Posterior vena cava (tissue), 2 donors: ENCODE measurements at regions of chr20 and their contacts with region 1.

Region 1: DNA sequence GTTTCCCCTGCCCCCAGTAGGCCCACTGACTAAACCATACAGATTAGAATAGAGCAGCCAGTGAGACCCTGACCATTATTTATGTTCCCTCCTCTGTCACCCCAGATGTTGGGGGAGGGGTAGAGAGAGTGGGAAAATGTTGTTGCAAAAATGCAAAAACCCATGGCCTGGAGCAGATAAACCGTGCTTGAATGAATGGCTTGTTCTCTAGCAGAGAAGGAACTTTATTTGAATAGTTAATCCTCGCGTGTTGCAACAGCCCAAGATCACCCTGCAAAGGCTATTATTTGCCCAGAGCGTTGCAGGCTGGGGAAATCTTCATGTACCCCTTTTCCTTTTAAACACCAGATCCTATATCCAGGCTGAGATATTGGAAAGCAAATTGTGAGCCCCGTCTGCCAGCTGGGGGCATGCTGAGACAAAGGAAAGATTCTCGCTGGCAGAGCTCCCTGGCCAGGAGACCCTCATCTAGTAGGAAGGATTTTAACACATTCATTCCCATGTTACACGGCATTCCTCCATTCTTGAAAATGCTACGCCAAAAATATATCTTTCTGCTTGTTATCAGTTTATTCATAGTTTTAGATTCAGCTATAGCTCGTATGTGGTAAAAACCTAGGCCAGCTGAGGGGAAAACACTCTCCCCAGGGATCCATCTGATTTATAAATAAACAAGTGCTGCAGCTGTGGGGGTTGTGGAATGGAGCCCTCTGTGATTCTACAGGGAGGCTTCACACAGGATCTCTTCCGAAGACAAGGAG is 53.0 kb downstream of the LINC00237 start:
- DNase-seq: no peak

Region 2: GRCh38 chr20:19121469-19121868 is 1931.7 kb before region 1 on chr20:
- intact Hi-C with region 1: loop called in 1 of 2 experiments (anchors 5 kb)
- DNase-seq: no peak